Panc1 (cell line): ENCODE measurements at regions of chr2 and their contacts with region 1.

Region 1: DNA sequence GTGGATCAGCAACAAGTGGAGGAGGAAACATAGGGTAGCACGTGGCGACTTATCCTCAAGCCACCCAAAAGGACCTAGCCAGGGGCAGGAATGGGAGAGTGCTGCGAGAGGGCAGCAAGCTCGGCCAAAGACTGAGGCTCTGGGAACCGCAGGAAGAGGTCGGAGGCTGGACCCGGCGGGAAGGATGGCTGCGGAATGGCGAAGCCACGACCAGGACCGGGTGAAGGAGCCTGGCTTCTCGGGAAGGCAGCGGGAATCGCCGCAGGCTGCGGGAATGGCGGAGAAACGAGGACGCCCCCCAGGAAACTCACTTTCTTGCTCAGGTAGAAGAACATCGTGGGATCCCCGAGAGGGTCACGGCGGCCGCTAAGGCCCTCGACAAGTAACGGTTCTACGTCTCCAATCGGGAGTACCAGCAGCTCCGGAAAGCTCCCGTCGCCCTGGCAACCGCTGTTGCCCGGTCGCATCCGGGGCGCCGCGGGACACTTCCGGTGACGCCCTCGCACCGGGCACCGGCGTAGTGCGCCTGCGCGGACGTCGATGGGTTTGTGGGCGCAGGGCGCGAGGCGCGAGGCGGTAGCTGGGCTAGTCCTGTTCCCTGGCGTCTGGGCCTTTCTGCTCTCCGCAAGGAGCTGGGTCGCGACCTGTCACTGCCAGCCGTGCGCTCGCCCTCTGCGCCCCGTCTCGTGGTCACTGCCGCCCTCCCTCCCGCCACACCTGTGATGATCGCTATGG is at the start of gene WDR35:
- DNase-seq: peak; percentile 67
- ATAC-seq: peak; percentile 99
- H3K4me3 ChIP-seq: peak within 1 kb of the TSS; percentile 90 to 99
- H3K27ac ChIP-seq: peak within 1 kb of the TSS; percentile 95
- H3K4me1 ChIP-seq: peaks cover 16% of the 10 kb centered on the region
- H3K27me3 ChIP-seq: no peaks in the 10 kb centered on the region
- CTCF ChIP-seq: no peak
- total RNA-seq, gene WDR35: 13.8 TPM

Region 2: GRCh38 chr2:18408638-18409037 is 1581.2 kb before region 1 on chr2:
- CTCF ChIA-PET with region 1: no interaction called
- POLR2A ChIA-PET with region 1: interaction called, 18 read pairs
- in situ Hi-C with region 1: no loop called
- intact Hi-C with region 1: no loop called
- DNase-seq: no peak
- ATAC-seq: no peak
- H3K4me3 ChIP-seq: no peak overlapping the region
- H3K27ac ChIP-seq: no peak overlapping the region
- H3K4me1 ChIP-seq: no peaks in the 10 kb centered on the region
- H3K27me3 ChIP-seq: no peaks in the 10 kb centered on the region; the same call in 1 of the 2 replicates
- CTCF ChIP-seq: no peak

Region 3: GRCh38 chr2:20273045-20273444 is 283.2 kb after region 1 on chr2:
- CTCF ChIA-PET with region 1: no interaction called
- POLR2A ChIA-PET with region 1: no interaction called
- in situ Hi-C with region 1: no loop called
- intact Hi-C with region 1: no loop called
- DNase-seq: no peak
- ATAC-seq: no peak
- H3K4me3 ChIP-seq: no peak overlapping the region
- H3K27ac ChIP-seq: no peak overlapping the region
- H3K4me1 ChIP-seq: no peaks in the 10 kb centered on the region
- H3K27me3 ChIP-seq: no peaks in the 10 kb centered on the region
- CTCF ChIP-seq: no peak